ENCODE measurements at regions of chr3 and their contacts with region 1.

Region 1: GRCh38 chr3:120039642-120040610 is 54.3 kb downstream of the GSK3B start:
- DNase-seq: no peak

Region 2: GRCh38 chr3:118987477-118987876 is 1052.4 kb before region 1 on chr3:
- intact Hi-C with region 1: no loop called
- DNase-seq: no peak

Region 3: GRCh38 chr3:119955972-119956371 is 84.0 kb before region 1 on chr3:
- intact Hi-C with region 1: loop called in 1 of 2 experiments (anchors 2 kb)
- DNase-seq: no peak

Region 4: GRCh38 chr3:120021523-120021922 is 18.4 kb before region 1 on chr3:
- intact Hi-C with region 1: no loop called
- DNase-seq: no peak

Region 5: DNA sequence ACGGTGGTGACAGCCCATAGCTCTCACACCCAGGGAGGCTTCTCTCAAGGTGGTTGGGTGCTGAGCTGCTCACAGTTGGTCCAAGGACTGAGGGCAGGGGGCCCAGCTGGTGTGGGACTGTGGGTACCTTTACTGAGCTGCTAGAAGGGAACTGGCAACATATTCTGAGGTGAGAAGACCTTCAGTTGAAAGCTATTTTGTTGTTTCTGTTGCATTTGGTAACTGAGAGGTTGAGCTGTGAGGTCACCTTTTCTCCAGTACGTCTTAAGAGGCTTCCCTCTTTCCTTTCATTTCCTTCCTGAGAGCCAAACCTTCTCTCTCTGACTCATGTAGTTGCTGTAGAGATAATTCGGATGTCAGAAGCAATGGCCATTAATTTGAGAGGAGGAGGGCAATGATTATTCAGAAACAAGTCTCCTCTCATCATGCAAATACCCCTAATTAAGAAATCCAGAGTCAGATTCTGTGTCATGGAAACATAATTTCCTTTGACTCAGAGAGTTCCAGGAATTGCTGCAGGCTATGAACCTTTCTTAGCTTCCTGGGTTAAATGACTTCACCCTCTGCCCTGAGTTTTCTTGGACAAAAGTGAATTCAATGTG is 113.3 kb after region 1 on chr3:
- intact Hi-C with region 1: loop called in 1 of 2 experiments (anchors 10 kb)
- DNase-seq: no peak

Region 6: GRCh38 chr3:120324192-120324591 is 284.3 kb after region 1 on chr3:
- intact Hi-C with region 1: no loop called
- DNase-seq: no peak

Region 7: DNA sequence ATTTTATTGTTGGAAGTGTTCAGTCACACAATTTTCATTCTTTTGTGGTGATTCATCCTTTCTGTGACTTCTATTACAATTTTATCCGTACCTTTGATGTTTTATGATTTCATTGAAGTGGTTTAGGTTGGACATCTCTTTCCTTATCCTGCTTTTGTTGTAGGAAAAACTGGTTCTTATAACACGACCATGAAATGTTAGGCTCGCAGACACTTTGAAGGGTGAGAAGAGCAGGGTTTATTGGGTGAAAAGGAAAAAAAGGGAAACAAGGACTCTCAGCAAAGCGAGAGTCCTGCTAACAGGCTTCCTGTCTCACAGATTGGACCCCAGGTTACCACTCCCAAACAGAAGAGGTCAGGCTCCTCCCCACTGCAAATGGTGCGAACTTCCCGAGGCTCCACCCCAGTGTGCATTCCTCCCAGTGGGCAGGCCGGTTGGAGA is 1125.5 kb after region 1 on chr3:
- intact Hi-C with region 1: no loop called
- DNase-seq: no peak